Heart right ventricle (tissue), 16 donors: ENCODE measurements at regions of chr1 and their contacts with region 1.

Region 1: DNA sequence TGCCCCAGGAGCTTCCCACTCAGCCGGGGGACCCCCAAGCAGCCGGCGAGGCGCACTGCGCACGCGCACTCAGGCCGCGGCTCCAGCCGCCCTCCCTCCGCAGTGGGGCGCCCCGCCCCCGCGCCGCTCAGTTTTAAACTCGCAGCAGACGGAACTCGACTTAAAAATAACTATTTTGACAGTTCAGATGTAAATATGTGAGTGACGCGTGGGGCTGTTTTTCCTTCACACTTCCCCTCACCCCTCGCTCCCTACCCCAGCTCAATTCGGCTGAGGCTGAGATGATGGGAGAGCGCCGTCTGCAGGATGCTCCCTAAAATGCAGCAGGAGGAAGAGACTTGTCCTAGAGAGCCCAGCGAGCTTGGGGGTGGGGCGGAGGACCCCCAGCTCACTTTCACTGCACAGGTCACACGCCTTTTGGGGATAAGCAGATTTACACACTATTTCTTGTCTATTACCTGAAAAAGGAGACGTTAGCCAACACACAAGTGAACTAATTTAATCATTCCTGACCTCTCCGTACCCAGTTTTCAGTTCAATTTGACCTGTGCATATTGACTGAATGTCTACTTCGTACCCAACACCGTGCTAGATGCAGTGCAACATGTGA is 8.9 kb upstream of the LEMD1 start:
- DNase-seq: peak; percentile 51 to 60
- ATAC-seq: peak; percentile 65 to 85 (median 80)
- H3K4me3 ChIP-seq: peak overlapping the region; percentile 12 to 60 (median 53)
- H3K27ac ChIP-seq: peak overlapping the region in 2 of 10 donors; percentile 10 to 35
- H3K4me1 ChIP-seq: peaks cover 0 to 9% (median 7%) of the 10 kb centered on the region in 9 donors
- H3K27me3 ChIP-seq: peaks cover 0 to 14% (median 0%) of the 10 kb centered on the region in 7 donors
- CTCF ChIP-seq: peak; percentile 59 to 87 (median 78)

Region 2: GRCh38 chr1:204558467-204558866 is 872.3 kb before region 1 on chr1:
- intact Hi-C with region 1: no loop called
- DNase-seq: no peak
- ATAC-seq: no peak
- H3K4me3 ChIP-seq: no peak overlapping the region
- H3K27ac ChIP-seq: no peak overlapping the region
- H3K4me1 ChIP-seq: peaks cover 0 to 6% (median 0%) of the 10 kb centered on the region in 9 donors
- H3K27me3 ChIP-seq: no peaks in the 10 kb centered on the region
- CTCF ChIP-seq: no peak

Region 3: GRCh38 chr1:205354259-205354904 is 76.4 kb before region 1 on chr1:
- intact Hi-C with region 1: loop called in 2 of 10 experiments (anchors 5 to 10 kb)
- DNase-seq: peak in 1 of 2 donors; percentile 56
- ATAC-seq: peak in 4 of 8 donors; percentile 43 to 61 (median 47)
- H3K4me3 ChIP-seq: no peak overlapping the region
- H3K27ac ChIP-seq: no peak overlapping the region
- H3K4me1 ChIP-seq: peaks cover 0 to 19% (median 0%) of the 10 kb centered on the region in 9 donors
- H3K27me3 ChIP-seq: peaks cover 7 to 27% (median 20%) of the 10 kb centered on the region in 7 donors
- CTCF ChIP-seq: peak; percentile 71 to 90 (median 83)

Region 4: GRCh38 chr1:205416322-205416721 is 14.5 kb before region 1 on chr1:
- intact Hi-C with region 1: loop called in 1 of 10 experiments (anchors 2 kb)
- DNase-seq: no peak
- ATAC-seq: peak in 6 of 8 donors; percentile 49 to 75 (median 58)
- H3K4me3 ChIP-seq: no peak overlapping the region
- H3K27ac ChIP-seq: peak overlapping the region in 3 of 10 donors; percentile 11 to 44 (median 34)
- H3K4me1 ChIP-seq: peaks cover 0 to 29% (median 0%) of the 10 kb centered on the region in 9 donors
- H3K27me3 ChIP-seq: peaks cover 0 to under 1% (median 0%) of the 10 kb centered on the region in 7 donors
- CTCF ChIP-seq: no peak